HEK293 (cell line): ENCODE measurements at regions of chr1 and their contacts with region 1.

Region 1: DNA sequence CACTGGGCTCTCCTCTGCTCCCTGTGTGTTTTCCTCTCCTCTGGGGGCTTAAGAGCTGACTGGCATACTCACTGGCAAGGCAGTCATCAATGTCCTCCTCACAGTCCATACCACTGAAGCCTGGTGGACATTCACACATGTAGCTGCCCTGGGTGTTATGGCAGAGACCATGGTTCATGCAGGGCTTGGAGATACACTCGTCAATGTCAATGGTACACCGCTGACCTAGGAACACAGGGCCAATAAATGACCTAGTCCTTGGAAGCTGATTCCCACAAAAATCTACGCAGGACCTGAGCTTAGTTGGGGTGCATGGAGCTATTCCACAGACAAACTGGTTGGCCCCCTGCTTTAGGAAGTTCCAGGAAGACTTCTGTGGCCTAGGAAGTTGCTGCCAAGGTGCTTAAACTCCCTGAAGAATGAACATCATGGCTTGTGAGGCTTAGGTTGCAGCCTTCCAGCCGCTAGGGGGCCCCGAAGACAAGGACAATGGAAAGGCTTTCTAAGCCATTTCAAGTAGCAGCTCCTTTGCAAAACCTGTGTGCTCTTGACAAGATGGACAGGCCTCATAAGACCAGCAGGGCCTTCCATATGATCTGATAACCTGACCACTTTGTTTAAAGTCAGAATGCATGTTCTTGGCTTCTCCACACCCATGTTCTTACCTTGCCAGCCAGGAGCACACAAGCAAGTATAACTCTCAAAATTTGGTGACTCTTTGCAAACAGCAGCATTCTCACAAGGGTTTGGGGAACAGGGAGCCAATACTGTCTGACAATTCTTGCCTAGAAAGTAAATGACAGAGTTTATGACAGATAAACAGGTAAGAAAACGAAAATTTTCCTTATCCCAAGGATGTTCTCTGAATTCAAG is 52.3 kb upstream of the ADAM30 start:
- H3K4me3 ChIP-seq: no peak overlapping the region
- H3K27ac ChIP-seq: no peak overlapping the region
- H3K4me1 ChIP-seq: no peaks in the 10 kb centered on the region
- CTCF ChIP-seq: peak; percentile 64; the same call in 1 of the 2 replicates

Region 2: DNA sequence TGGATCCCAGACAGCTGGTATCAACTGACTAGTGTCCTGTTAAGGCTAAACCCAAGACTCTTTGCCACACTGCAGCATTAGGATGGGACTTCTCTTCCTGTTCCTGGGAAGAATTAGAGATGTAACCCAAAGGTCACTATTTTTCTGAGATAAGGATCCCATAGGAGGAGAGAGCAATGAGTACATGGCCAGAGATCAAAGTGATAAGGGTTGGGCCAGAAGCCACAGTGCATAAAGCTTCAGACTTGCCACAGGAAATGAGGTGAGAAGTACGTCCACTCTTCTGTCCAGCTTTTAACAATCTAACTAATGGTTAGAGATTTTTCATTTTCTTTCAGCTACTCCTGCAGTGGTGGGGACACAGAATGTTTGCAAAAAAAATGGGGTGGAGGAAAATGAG is 441.6 kb before region 1 on chr1 and contains the start of gene HSD3B1:
- CTCF ChIA-PET with region 1: no interaction called
- POLR2A ChIA-PET with region 1: no interaction called
- H3K4me3 ChIP-seq: no peak within 1 kb of the TSS
- H3K27ac ChIP-seq: no peak within 1 kb of the TSS
- H3K4me1 ChIP-seq: no peaks in the 10 kb centered on the region
- CTCF ChIP-seq: no peak

Region 3: DNA sequence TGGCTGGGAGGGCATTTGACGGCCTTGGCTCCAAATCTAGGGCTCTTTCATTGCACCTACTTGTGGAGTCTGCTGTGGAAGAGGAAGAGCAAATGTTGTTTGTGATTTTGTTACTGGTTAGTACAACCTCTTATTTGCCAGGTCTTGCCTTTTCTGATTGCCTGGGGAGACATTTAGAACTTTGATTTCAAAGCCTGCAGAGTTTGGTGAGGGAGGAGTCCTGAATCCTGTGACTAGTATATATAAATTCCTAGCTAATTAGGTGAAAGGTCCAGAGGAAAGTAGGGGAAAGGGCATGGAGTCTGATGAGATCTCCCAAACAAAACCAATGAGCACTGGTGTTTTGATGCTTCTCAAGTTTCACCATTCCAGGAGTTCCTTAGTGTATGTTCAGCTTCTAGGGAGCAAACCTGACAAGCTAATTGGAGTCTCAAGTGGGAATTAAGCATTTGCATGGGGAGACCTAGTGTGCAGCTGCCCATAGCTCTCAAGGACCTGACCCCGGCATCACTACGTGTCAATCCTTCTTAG is 174.8 kb before region 1 on chr1:
- CTCF ChIA-PET with region 1: no interaction called
- POLR2A ChIA-PET with region 1: no interaction called
- H3K4me3 ChIP-seq: no peak overlapping the region
- H3K27ac ChIP-seq: no peak overlapping the region
- H3K4me1 ChIP-seq: peaks cover 7% of the 10 kb centered on the region; the same call in 1 of the 2 replicates
- CTCF ChIP-seq: no peak

Region 4: DNA sequence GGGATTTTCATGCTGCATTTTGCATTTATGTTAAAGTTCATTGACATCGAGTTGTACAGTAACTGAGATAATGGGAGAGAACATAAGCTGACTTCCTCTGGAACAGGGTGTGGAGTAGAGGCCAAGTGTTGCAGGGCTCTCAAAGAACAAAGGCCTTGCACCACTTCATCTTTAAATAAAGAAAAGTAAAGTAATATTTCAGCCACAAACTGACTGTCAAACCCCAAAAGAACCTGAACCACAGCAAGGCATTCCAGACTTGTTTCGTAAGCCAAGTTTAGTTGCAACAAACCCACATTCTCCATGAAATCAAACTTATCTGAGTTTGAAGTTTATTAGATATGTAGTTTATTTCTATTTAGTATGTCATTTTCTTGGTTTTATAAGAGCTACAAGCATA is 160.8 kb before region 1 on chr1:
- CTCF ChIA-PET with region 1: no interaction called
- POLR2A ChIA-PET with region 1: no interaction called
- H3K4me3 ChIP-seq: no peak overlapping the region
- H3K27ac ChIP-seq: no peak overlapping the region
- H3K4me1 ChIP-seq: peaks cover 5% of the 10 kb centered on the region
- CTCF ChIP-seq: no peak

Region 5: DNA sequence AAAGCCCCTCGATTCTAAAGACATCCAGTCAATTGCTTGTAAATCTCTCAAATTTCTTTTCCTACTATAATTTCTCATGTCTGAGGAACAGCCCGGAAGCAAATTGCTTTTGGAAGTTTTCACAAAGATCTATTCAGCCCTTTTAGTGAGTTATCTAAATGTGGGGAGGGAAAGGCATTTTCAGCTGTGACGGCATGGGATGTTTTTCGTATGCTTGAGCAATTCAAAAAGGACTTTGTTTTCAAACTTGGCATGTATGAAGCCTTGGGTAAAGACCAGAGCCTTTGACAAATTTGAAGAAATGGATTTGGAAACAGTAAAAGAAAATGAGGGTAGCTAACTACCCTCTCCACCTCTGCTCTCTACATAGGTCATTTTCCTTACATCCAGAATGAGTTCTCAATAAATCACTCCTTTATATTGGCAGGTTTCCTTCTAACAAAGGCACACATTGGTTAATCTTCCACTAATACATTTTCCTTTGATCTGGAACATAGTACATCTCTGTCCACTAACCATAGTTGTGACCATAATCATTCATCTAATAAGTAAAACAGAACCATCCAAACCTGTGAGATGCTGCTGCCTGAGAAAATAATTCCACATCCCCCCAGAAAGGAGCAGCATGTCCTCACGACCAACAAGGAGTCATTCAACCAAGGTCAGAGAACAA is 13.9 kb after region 1 on chr1:
- CTCF ChIA-PET with region 1: interaction called, 36 read pairs
- POLR2A ChIA-PET with region 1: no interaction called
- H3K4me3 ChIP-seq: no peak overlapping the region
- H3K27ac ChIP-seq: no peak overlapping the region
- H3K4me1 ChIP-seq: no peaks in the 10 kb centered on the region
- CTCF ChIP-seq: no peak